ENCODE measurements at regions of chr1 and their contacts with region 1.

Region 1: DNA sequence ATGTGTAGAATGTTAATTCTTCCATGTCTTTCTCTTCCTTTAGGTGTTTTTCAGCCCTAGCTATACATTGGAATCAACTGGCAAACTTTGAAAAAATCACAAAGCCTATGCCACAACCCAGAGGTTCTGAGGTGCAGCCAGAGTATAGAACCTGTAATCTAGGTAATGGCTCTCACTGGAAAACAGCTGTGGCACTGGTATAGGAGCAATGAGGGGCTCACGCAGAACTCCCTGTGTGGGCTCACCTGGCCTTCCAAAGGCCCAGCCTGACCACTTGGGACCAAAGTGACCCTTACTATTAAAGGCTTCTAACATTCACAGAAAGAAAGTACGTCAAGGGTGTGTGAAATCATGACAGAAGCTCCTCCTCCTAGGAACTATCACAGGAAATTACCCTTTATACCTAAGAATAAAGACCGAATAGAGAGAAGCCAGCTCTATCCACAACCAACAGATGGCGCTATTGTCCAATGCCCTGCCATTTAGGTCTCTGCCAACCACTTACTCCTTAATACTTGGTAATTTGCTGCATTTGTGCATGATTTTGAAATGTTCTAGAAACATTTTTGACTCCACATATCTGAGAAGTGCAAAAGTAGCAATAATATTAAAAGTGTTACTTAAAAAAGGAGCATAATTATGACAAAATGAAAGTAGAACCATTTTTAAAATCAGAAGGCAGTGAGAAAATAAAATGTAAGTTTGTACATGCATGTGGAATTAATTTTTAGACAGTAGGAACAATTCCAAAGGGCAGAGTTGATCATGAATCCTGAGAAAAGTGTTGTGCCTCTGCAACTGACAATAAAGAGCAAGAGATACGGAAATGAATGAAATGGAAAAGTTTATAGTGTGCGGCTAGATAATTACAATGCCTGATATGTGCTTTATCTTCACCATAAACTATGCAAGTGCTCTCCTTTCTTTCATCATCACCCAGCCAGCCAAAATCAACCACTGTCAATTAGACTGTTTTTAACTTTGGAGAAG is 93.1 kb upstream of the HAO2 start:
- DNase-seq: peak; percentile 48 to 71 (median 62)
- H3K4me3 ChIP-seq: no peak overlapping the region
- H3K27ac ChIP-seq: no peak overlapping the region
- H3K4me1 ChIP-seq: no peaks in the 10 kb centered on the region
- H3K27me3 ChIP-seq: peaks cover 0 to 12% (median 0%) of the 10 kb centered on the region in 5 experiments

Region 2: DNA sequence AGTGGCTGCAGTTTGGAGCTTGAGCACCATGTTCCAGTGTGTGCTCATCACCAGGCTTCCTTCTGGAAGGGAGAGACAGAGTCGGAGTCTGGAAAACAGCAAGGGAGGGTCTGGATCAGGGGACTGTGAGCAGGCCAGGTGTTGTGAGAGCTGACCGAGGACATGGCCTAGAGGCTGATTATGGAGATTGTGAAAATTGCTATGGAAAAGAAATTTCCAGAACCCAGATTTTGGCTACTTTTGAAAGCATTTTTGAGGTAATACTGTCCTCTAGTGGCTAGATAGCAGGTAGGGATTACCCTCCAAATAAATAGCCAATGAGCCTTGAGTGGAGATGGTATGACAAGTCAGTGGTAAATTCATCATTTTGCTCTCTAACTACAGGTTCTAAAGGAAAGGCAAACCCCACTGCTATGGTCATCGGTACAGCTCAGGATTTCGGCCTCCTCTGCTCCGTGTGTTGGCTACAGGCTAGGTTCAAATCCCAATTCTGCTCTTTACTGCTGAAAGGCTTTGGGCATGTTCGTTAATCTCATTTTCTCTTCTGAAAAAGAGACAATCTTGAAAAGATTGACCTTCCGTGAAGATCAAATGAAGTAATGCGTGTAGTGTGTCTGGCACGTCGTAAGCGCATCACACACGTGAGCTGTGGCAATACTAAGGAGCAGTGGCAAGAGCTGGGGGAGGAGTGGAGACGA is 92.1 kb after region 1 on chr1:
- CTCF ChIA-PET with region 1: interaction called, 29 read pairs
- POLR2A ChIA-PET with region 1: no interaction called
- DNase-seq: peak; percentile 4 to 40 (median 35)
- H3K4me3 ChIP-seq: no peak overlapping the region
- H3K27ac ChIP-seq: no peak overlapping the region
- H3K4me1 ChIP-seq: peaks cover 0 to 2% (median 0%) of the 10 kb centered on the region in 4 experiments
- H3K27me3 ChIP-seq: peaks cover 0 to 5% (median 3%) of the 10 kb centered on the region in 5 experiments